ENCODE measurements at regions of chr6 and their contacts with region 1.

Region 1: GRCh38 chr6:83615025-83615999 is 93.6 kb downstream of the SNAP91 start:
- DNase-seq: peak; percentile 31 to 48 (median 36)
- ATAC-seq: peak; percentile 78
- H3K4me3 ChIP-seq: no peak overlapping the region
- H3K27ac ChIP-seq: no peak overlapping the region
- H3K4me1 ChIP-seq: no peaks in the 10 kb centered on the region
- H3K27me3 ChIP-seq: no peaks in the 10 kb centered on the region; a peak in 1 of 5 replicates
- CTCF ChIP-seq: peak; percentile 33 to 68 (median 59); a peak in 5 of 6 replicates
- EP300 ChIP-seq: no peak
- POLR2A ChIP-seq: no peak
- RAD21 ChIP-seq: peak; percentile 53 to 66

Region 2: DNA sequence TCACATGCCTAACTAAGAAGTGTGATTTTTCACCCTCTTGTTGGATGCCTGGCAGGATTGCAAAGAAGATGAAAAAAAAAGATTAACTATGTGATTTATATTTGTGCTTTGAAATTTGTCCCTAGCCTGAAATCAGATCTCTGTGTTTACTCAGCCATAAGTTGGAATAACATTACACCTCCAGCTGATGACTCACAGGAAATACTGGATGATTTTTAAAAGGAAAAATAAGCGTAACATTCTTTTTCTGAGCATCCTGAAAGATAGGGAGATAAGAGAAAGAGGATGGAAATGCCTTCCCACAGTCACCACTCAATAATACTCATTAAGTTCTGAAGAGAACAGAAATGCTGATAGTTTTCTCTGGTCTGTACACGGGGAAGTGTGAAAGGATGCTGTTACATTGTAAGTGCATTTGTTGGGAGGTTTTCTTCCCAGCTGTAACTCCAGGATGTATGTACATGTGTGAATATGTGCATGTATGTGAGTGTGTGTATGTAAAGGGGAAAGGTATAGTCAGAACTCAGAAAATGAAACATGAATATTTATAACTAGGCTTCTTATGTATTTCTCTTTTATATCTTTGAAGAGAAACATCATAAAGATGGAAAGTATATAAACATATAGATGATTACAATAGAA is 200.4 kb after region 1 on chr6:
- CTCF ChIA-PET with region 1: no interaction called
- POLR2A ChIA-PET with region 1: no interaction called
- in situ Hi-C with region 1: no loop called
- intact Hi-C with region 1: loop called (anchors 10 kb)
- DNase-seq: no peak
- ATAC-seq: no peak
- H3K4me3 ChIP-seq: no peak overlapping the region
- H3K27ac ChIP-seq: no peak overlapping the region
- H3K4me1 ChIP-seq: no peaks in the 10 kb centered on the region
- H3K27me3 ChIP-seq: no peaks in the 10 kb centered on the region
- CTCF ChIP-seq: no peak
- EP300 ChIP-seq: no peak
- POLR2A ChIP-seq: no peak
- RAD21 ChIP-seq: no peak

Region 3: DNA sequence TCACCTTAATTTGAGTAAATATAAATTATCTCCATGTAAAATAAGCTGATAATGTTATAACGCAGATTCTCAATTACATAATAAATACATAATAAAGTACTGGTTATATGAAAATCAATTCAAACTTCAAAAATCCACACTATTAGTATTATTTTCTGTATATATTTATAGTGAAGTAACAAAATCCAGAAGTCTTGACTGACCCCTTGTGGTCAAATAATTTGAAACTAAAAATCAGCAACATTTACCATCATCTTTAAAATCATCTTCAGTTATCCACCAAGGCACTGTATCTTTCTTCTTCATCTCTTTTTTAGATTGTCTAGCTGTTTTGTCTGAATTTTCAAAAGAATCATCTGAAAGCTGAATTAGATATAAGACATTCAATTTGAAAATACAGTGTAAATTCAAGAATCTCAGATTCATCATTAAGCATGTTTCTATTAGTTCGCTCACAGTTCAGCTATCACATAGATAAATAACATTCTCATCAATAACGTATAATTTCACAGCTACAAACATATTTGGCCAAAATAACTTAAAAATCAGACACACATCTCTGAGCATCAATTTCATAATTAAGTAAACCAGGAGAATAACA is 605.6 kb after region 1 on chr6:
- CTCF ChIA-PET with region 1: interaction called, 10 read pairs
- POLR2A ChIA-PET with region 1: no interaction called
- in situ Hi-C with region 1: loop called (anchors 25 kb)
- intact Hi-C with region 1: loop called (anchors 2 kb)
- DNase-seq: peak in 3 of 4 experiments; percentile 11 to 58 (median 16)
- ATAC-seq: 0 out of 3 replicates have a peak, but pooled peaks have one; percentile 49
- H3K4me3 ChIP-seq: no peak overlapping the region
- H3K27ac ChIP-seq: no peak overlapping the region
- H3K4me1 ChIP-seq: peaks cover 0 to under 1% of the 10 kb centered on the region in 2 experiments; a peak in 2 of 5 replicates
- H3K27me3 ChIP-seq: no peaks in the 10 kb centered on the region
- CTCF ChIP-seq: peak in 2 of 3 experiments; percentile 43 to 65; a peak in 4 of 6 replicates
- EP300 ChIP-seq: no peak
- POLR2A ChIP-seq: no peak
- RAD21 ChIP-seq: peak; percentile 81 to 84

Measured in K562 (cell line).